ENCODE measurements at regions of chr19 and their contacts with region 1.

Region 1: GRCh38 chr19:12484371-12485051 is at the start of gene ZNF709:
- DNase-seq: peak; percentile 93
- ATAC-seq: peak; percentile 96
- H3K4me3 ChIP-seq: peak within 1 kb of the TSS; percentile 81 to 98 (median 92)
- H3K4me3 Mint-ChIP-seq: peak within 1 kb of the TSS; percentile 91
- H3K27ac ChIP-seq: peak within 1 kb of the TSS; percentile 69 to 84
- H3K27ac Mint-ChIP-seq: peak within 1 kb of the TSS; percentile 89
- H3K4me1 ChIP-seq: peaks cover 30 to 39% of the 10 kb centered on the region in 2 donors
- H3K4me1 Mint-ChIP-seq: peaks cover 34% of the 10 kb centered on the region
- H3K27me3 ChIP-seq: no peaks in the 10 kb centered on the region
- H3K27me3 Mint-ChIP-seq: no peaks in the 10 kb centered on the region
- CTCF ChIP-seq: no peak
- total RNA-seq, gene ZNF709: 8.4 and 9.3 TPM in 2 replicates

Region 2: DNA sequence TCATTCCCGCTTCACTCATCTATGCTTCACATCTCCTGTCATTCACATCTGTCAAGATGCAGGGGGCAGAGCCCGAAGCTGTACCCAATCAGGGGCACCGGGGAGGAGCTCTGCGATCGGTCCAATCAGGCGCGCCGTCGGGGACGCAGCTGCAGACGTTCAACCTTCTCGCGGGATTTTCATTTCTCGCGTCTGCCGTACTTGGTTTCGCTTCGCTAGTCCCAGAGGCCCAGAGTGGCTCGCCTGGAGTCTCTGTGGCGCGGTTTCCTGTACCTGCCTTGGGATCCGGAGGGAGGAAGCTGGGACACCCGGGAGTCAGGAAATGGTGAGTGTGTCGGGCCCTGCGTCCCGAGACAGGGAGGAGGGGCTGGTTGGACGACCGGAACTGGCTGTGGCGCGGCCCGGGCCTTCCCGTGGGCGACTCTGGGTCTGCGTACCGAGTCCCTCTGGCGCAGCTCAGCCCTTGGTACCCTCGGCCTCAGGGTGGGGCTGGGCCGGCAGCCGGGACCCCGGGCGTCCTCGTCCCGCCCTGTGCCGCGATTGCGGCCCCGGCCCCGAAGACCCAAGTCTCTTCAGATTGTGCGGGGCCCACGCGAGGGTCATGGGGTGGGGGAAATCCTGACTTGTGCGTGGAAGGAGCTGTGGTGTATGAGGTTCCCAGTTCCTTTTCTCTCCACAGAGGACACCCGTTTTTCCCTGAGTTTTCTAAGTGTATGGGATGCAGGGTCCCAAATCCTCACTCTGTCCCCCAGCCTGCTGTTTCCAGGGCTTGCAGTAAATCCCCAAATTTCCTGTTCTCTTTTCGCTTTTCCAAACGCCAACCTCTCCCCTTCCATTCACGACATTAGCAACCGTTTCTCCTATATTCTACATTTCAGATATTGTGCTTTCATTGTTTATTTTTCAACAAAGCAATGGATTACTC is 321.4 kb before region 1 on chr19 and contains the start of gene ZNF136:
- CTCF ChIA-PET with region 1: no interaction called
- POLR2A ChIA-PET with region 1: no interaction called
- intact Hi-C with region 1: loop called (anchors 10 kb)
- DNase-seq: peak; percentile 94
- ATAC-seq: peak; percentile 99
- H3K4me3 ChIP-seq: peak within 1 kb of the TSS; percentile 58 to 96 (median 91)
- H3K4me3 Mint-ChIP-seq: peak within 1 kb of the TSS; percentile 92
- H3K27ac ChIP-seq: peak within 1 kb of the TSS; percentile 96 to 99
- H3K27ac Mint-ChIP-seq: peak within 1 kb of the TSS; percentile 99
- H3K4me1 ChIP-seq: peaks cover 10 to 15% of the 10 kb centered on the region in 2 donors
- H3K4me1 Mint-ChIP-seq: peaks cover 34% of the 10 kb centered on the region
- H3K27me3 ChIP-seq: no peaks in the 10 kb centered on the region
- H3K27me3 Mint-ChIP-seq: no peaks in the 10 kb centered on the region
- CTCF ChIP-seq: no peak
- total RNA-seq, gene ZNF136: 30.8 and 33.5 TPM in 2 replicates

Region 3: DNA sequence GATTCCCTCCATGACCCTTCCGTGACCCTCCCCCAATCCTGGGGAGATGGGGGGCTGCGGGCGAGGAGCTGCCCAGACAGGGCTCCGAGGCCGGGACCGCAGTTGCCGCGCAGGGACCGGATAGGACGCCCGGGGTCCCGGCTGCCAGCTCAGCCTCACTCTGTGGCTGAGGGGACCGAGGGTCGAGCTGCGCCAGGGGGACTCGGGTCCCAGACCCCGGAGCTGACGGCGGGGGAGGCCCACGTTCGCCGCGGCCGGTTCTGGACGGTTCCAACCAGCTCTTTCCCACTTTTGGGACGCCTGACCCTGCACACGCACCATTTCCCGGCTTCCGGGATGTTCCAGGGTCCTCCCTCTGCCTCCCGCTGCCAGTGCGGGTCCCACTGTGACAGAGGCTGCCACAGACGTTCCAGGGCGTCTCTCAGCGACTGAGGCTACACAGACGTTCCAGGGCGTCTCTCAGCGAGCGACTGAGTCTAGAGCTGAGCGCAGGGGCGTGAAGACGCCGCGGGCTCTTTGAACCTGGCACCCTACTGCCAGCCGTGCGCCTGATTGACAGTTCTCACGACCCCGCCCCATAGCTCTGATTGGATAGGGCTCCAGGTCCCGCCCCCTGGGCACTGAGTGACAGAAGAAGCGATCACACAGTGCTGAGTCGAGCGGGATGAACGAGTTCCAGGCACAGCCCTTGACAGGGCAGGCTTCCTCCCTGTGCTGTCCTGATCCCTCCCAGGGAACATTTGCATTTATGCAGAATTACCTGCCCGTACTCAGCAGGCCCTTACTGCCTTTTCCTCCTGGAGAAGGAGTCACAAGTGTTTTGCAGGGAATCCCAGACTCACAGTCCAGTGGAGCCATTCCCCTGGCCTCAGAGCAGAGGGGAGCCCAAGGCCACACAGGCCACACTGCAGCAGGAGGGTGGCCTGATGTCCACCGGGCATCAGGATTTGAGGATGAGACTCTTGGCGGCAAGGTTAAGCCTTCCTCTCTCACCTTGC is 151.1 kb before region 1 on chr19 and contains the start of gene ZNF563:
- CTCF ChIA-PET with region 1: no interaction called
- POLR2A ChIA-PET with region 1: no interaction called
- intact Hi-C with region 1: loop called (anchors 1 kb)
- DNase-seq: peak; percentile 95
- ATAC-seq: peak; percentile 92
- H3K4me3 ChIP-seq: peak within 1 kb of the TSS; percentile 53 to 97 (median 83)
- H3K4me3 Mint-ChIP-seq: peak within 1 kb of the TSS; percentile 88
- H3K27ac ChIP-seq: peak within 1 kb of the TSS; percentile 76 to 86
- H3K27ac Mint-ChIP-seq: peak within 1 kb of the TSS; percentile 95
- H3K4me1 ChIP-seq: peaks cover 30 to 35% of the 10 kb centered on the region in 2 donors
- H3K4me1 Mint-ChIP-seq: peaks cover 37% of the 10 kb centered on the region
- H3K27me3 ChIP-seq: no peaks in the 10 kb centered on the region
- H3K27me3 Mint-ChIP-seq: no peaks in the 10 kb centered on the region
- CTCF ChIP-seq: no peak
- total RNA-seq, gene ZNF563: 6.1 and 7.3 TPM in 2 replicates

Region 4: GRCh38 chr19:12440541-12441316 is 43.8 kb before region 1 on chr19 and contains the start of gene ZNF443:
- CTCF ChIA-PET with region 1: no interaction called
- POLR2A ChIA-PET with region 1: no interaction called
- intact Hi-C with region 1: loop called (anchors 1 kb)
- DNase-seq: peak; percentile 97
- ATAC-seq: peak; percentile 97
- H3K4me3 ChIP-seq: peak within 1 kb of the TSS; percentile 57 to 91 (median 86)
- H3K4me3 Mint-ChIP-seq: peak within 1 kb of the TSS; percentile 99
- H3K27ac ChIP-seq: peak within 1 kb of the TSS; percentile 47 to 68
- H3K27ac Mint-ChIP-seq: peak within 1 kb of the TSS; percentile 92
- H3K4me1 ChIP-seq: peaks cover 3 to 10% of the 10 kb centered on the region in 2 donors
- H3K4me1 Mint-ChIP-seq: peaks cover 24% of the 10 kb centered on the region
- H3K27me3 ChIP-seq: no peaks in the 10 kb centered on the region
- H3K27me3 Mint-ChIP-seq: no peaks in the 10 kb centered on the region
- CTCF ChIP-seq: no peak
- total RNA-seq, gene ZNF443: 5.5 and 6.2 TPM in 2 replicates

Region 5: GRCh38 chr19:12513531-12514061 is 29.1 kb after region 1 on chr19:
- CTCF ChIA-PET with region 1: no interaction called
- POLR2A ChIA-PET with region 1: no interaction called
- intact Hi-C with region 1: no loop called
- DNase-seq: no peak
- ATAC-seq: no peak
- H3K4me3 ChIP-seq: no peak overlapping the region
- H3K4me3 Mint-ChIP-seq: no peak overlapping the region
- H3K27ac ChIP-seq: no peak overlapping the region
- H3K27ac Mint-ChIP-seq: no peak overlapping the region
- H3K4me1 ChIP-seq: no peaks in the 10 kb centered on the region
- H3K4me1 Mint-ChIP-seq: no peaks in the 10 kb centered on the region
- H3K27me3 ChIP-seq: peaks cover 0 to 11% (median 0%) of the 10 kb centered on the region in 4 experiments
- H3K27me3 Mint-ChIP-seq: no peaks in the 10 kb centered on the region
- CTCF ChIP-seq: no peak

Region 6: GRCh38 chr19:13162518-13163314 is 678.2 kb after region 1 on chr19:
- CTCF ChIA-PET with region 1: no interaction called
- POLR2A ChIA-PET with region 1: interaction called, 11 read pairs
- intact Hi-C with region 1: no loop called
- DNase-seq: peak; percentile 85
- ATAC-seq: peak; percentile 42
- H3K4me3 ChIP-seq: peak overlapping the region; percentile 24 to 71 (median 61)
- H3K4me3 Mint-ChIP-seq: peak overlapping the region; percentile 92
- H3K27ac ChIP-seq: peak overlapping the region; percentile 85 to 94
- H3K27ac Mint-ChIP-seq: peak overlapping the region; percentile 97
- H3K4me1 ChIP-seq: peaks cover 84 to 96% of the 10 kb centered on the region in 2 donors
- H3K4me1 Mint-ChIP-seq: peaks cover 62% of the 10 kb centered on the region
- H3K27me3 ChIP-seq: no peaks in the 10 kb centered on the region
- H3K27me3 Mint-ChIP-seq: no peaks in the 10 kb centered on the region
- CTCF ChIP-seq: no peak